ENCODE measurements at regions of chr19 and their contacts with region 1.

Region 1: GRCh38 chr19:56140583-56141416 is at the start of gene ZNF444:
- DNase-seq: peak; percentile 99
- H3K4me3 Mint-ChIP-seq: peak within 1 kb of the TSS; percentile 83
- H3K27ac Mint-ChIP-seq: peak within 1 kb of the TSS; percentile 86
- H3K4me1 Mint-ChIP-seq: peaks cover 36% of the 10 kb centered on the region
- H3K27me3 Mint-ChIP-seq: no peaks in the 10 kb centered on the region
- CTCF ChIP-seq: no peak
- total RNA-seq, gene ZNF444: 26.6 and 28.1 TPM in 2 replicates

Region 2: DNA sequence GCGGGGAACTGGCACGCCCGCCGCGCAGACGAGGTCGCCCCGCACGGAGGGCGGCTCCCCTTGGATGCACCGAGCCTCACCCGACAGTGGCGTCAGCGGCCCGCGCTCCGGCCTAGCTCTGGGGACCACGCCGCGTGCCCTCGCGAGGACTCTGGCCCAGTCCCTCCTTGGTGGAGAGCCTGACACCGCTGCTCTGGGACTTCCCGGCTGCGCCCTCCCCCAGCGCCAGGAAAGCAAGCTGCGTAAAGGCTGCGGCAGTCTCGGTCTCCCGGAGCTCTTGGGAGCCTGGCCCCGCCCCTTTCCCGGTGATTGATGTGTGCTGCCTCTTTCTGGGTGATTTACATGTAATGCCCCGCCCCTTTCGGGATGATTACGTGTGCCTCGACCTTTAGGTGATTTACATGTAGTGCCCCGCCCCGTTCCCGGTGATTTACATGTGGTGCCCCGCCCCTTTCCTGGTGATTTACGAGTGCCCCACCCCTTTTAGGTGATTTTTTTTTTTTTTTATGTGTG is 1677.2 kb before region 1 on chr19 and contains the start of gene LENG9:
- CTCF ChIA-PET with region 1: no interaction called
- POLR2A ChIA-PET with region 1: no interaction called
- intact Hi-C with region 1: loop called (anchors 5 kb)
- DNase-seq: peak; percentile 100
- H3K4me3 Mint-ChIP-seq: peak within 1 kb of the TSS; percentile 84
- H3K27ac Mint-ChIP-seq: peak within 1 kb of the TSS; percentile 99
- H3K4me1 Mint-ChIP-seq: peaks cover 14% of the 10 kb centered on the region
- H3K27me3 Mint-ChIP-seq: no peaks in the 10 kb centered on the region
- CTCF ChIP-seq: no peak
- total RNA-seq, gene LENG9: 6.9 and 9.3 TPM in 2 replicates

Region 3: GRCh38 chr19:56121180-56122167 is 19.3 kb before region 1 on chr19 and contains the start of gene ZNF787:
- CTCF ChIA-PET with region 1: no interaction called
- POLR2A ChIA-PET with region 1: interaction called, 8 read pairs
- intact Hi-C with region 1: loop called (anchors 1 kb)
- DNase-seq: peak; percentile 97
- H3K4me3 Mint-ChIP-seq: peak within 1 kb of the TSS; percentile 83
- H3K27ac Mint-ChIP-seq: peak within 1 kb of the TSS; percentile 94
- H3K4me1 Mint-ChIP-seq: peaks cover 19% of the 10 kb centered on the region
- H3K27me3 Mint-ChIP-seq: no peaks in the 10 kb centered on the region
- CTCF ChIP-seq: no peak
- total RNA-seq, gene ZNF787: 58.2 and 68.6 TPM in 2 replicates

Region 4: DNA sequence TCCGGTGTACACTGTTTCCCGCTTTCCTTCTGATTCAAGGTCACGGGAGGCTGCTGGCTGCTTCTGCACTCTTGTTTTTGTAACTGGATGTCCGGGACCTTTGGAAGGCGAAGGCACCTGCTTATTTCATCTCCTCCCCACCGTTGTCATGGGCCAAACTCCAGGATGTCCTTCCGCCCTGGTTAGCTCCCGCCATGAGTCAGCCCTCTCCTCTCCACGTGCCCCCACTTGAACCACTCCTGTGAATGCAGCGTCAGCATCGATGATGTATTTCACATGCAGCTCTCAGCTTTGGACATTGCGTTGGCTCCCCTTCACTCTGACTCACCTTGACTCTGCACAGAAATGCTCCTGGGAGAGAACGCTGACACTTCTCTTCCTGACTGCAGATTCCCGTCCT is 29.5 kb after region 1 on chr19:
- CTCF ChIA-PET with region 1: interaction called, 4 read pairs
- POLR2A ChIA-PET with region 1: interaction called, 4 read pairs
- intact Hi-C with region 1: loop called (anchors 2 kb)
- DNase-seq: peak; percentile 93
- H3K4me3 Mint-ChIP-seq: peak overlapping the region; percentile 0
- H3K27ac Mint-ChIP-seq: no peak overlapping the region
- H3K4me1 Mint-ChIP-seq: peaks cover 7% of the 10 kb centered on the region
- H3K27me3 Mint-ChIP-seq: no peaks in the 10 kb centered on the region
- CTCF ChIP-seq: no peak

Region 5: GRCh38 chr19:56314562-56315077 is 173.8 kb after region 1 on chr19 and contains the start of gene ZSCAN5A:
- CTCF ChIA-PET with region 1: interaction called, 4 read pairs
- POLR2A ChIA-PET with region 1: interaction called, 7 read pairs
- intact Hi-C with region 1: loop called (anchors 1 kb)
- DNase-seq: peak; percentile 97
- H3K4me3 Mint-ChIP-seq: peak within 1 kb of the TSS; percentile 81
- H3K27ac Mint-ChIP-seq: peak within 1 kb of the TSS; percentile 100
- H3K4me1 Mint-ChIP-seq: peaks cover 18% of the 10 kb centered on the region
- H3K27me3 Mint-ChIP-seq: no peaks in the 10 kb centered on the region
- CTCF ChIP-seq: no peak
- total RNA-seq, gene ZSCAN5A: 6.2 and 8.1 TPM in 2 replicates

Measured in MCF 10A (cell line).